ENCODE measurements at regions of chr15 and their contacts with region 1.

Region 1: DNA sequence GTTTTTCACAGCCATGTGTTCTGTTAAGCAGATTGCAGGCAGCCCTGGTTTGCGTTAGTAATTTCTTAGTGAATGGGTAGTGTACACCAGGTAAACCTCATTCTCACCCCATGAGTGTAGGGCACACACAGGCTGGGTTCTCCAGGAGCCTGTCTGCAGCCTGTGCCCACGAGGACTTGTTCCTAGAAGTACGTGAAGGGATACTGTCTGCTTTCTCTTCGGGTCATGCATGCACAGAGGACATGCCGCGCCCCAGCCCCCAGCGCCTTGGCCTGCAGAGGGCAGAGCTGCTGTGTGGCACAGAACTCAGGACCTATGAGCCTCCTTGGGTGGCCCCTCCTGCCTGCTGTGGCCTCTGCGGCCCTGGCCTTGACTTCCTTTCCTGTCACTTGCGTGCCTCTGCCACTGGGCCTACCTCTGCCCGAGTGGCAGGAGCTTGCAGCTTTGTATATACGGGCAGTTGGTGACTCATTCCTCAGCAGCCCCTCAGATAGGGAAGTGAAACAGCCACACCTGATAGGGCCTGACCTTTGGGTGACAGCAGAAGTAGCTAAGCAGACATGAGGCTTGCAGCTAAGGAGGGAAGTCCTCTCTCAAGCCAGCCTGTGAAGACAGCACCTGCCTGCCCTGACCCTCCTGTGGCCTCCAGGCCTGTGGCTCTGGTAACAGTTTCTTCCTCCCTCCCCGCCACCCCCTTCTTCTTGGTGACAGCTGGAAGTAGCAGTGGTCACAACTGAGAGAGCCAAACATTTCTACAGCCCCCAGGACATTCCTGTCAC is 19.5 kb downstream of the PPCDC start:
- DNase-seq: peak; percentile 70 to 81
- ATAC-seq: peak; percentile 86 to 92 (median 89)
- H3K4me3 ChIP-seq: no peak overlapping the region
- H3K4me3 Mint-ChIP-seq: peak overlapping the region; percentile 39
- H3K27ac ChIP-seq: peak overlapping the region; percentile 96
- H3K27ac Mint-ChIP-seq: peak overlapping the region; percentile 86 to 89
- H3K4me1 ChIP-seq: peaks cover 67% of the 10 kb centered on the region
- H3K4me1 Mint-ChIP-seq: peaks cover 62 to 72% of the 10 kb centered on the region in 2 donors
- H3K27me3 ChIP-seq: no peaks in the 10 kb centered on the region
- H3K27me3 Mint-ChIP-seq: no peaks in the 10 kb centered on the region
- CTCF ChIP-seq: peak; percentile 61

Region 2: DNA sequence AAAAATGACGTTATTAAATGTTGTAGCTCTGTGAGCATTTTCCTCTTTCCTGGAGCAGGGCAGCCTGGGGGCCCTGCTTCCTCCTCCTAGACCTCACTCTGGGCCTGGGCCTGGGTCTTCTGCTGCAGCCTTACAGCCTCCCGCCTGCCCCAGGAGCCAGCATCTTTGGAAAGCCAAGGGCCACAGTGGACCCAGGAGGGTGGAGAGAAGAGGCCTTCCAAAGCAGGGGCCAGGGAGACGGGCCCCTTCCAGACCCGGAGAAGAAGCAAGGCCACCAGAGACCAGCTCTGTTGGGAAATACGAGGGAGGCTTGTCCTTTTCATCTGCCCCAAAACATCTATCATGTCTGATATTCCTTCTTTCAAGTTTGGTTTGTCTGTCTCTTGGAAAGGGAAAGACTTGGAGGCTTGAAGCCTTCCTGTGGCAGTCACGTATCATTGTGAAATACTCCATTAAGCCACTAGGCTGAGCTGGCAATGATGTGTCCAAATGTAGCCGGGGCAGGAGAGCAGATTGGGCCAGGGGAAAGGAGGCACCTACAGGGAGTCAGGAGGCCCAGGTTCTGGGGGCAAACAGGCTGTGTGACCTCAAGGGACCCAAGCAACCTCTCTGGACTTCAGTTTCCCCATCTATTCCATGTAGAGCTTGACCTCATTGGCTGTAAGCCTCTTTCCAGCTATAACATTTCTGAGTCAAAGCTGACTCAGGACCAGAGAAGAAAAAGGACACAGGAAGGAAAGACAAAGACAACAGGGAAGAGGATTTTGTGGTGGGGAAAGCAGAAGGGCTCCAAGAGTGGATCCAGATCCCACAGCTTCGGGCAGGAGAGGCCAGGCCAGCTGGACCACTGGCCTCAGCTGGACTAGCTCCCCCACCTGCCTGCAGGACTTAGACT is 706.6 kb before region 1 on chr15:
- intact Hi-C with region 1: no loop called
- DNase-seq: no peak
- ATAC-seq: no peak
- H3K4me3 ChIP-seq: no peak overlapping the region
- H3K4me3 Mint-ChIP-seq: no peak overlapping the region
- H3K27ac ChIP-seq: no peak overlapping the region
- H3K27ac Mint-ChIP-seq: no peak overlapping the region
- H3K4me1 ChIP-seq: no peaks in the 10 kb centered on the region
- H3K4me1 Mint-ChIP-seq: peaks cover 0 to 5% of the 10 kb centered on the region in 2 donors
- H3K27me3 ChIP-seq: no peaks in the 10 kb centered on the region
- H3K27me3 Mint-ChIP-seq: no peaks in the 10 kb centered on the region
- CTCF ChIP-seq: no peak

Region 3: DNA sequence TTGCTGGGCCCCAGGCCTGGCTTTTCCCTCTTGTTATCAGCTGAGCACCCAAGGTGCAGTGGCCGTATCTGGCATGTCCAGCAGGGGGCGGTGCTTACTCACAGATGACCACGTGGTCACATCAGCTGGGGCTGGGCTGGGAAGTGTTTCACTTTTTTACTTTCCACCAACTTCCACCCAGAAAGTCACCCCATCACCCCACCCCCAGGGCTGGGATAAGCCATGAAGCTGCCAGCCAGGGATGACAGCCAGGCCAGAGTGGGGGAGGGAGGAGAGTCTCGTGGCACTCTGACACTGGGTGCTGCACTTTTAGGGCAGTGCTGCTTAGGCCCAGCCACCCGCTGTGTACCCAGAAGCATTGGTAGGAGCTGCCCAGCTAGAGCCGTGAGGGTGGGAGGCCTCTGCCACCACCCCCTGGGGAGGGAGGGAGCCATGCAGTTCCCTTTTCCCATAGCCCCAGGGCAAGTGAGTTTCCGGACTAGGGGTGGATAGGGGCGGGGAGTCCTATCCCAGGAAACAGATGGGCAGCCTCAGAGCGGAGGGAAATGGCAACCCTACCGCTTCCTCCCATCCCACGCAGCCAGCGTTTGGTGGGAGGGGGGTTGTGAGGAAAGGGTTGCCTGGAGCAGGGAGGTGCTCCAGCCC is 13.4 kb before region 1 on chr15:
- intact Hi-C with region 1: loop called (anchors 2 kb)
- DNase-seq: peak; percentile 89 to 92
- ATAC-seq: peak; percentile 90 to 99 (median 98)
- H3K4me3 ChIP-seq: no peak overlapping the region
- H3K4me3 Mint-ChIP-seq: no peak overlapping the region
- H3K27ac ChIP-seq: no peak overlapping the region
- H3K27ac Mint-ChIP-seq: peak overlapping the region in 1 of 2 donors; percentile 39
- H3K4me1 ChIP-seq: peaks cover 31% of the 10 kb centered on the region
- H3K4me1 Mint-ChIP-seq: peaks cover 12 to 17% of the 10 kb centered on the region in 2 donors
- H3K27me3 ChIP-seq: no peaks in the 10 kb centered on the region
- H3K27me3 Mint-ChIP-seq: no peaks in the 10 kb centered on the region
- CTCF ChIP-seq: peak; percentile 92

Region 4: GRCh38 chr15:75081150-75081549 is 38.2 kb after region 1 on chr15:
- intact Hi-C with region 1: no loop called
- DNase-seq: no peak
- ATAC-seq: no peak
- H3K4me3 ChIP-seq: no peak overlapping the region
- H3K4me3 Mint-ChIP-seq: no peak overlapping the region
- H3K27ac ChIP-seq: no peak overlapping the region
- H3K27ac Mint-ChIP-seq: no peak overlapping the region
- H3K4me1 ChIP-seq: peaks cover 6% of the 10 kb centered on the region
- H3K4me1 Mint-ChIP-seq: peaks cover 0 to 6% of the 10 kb centered on the region in 2 donors
- H3K27me3 ChIP-seq: no peaks in the 10 kb centered on the region
- H3K27me3 Mint-ChIP-seq: peaks cover 0 to 3% of the 10 kb centered on the region in 2 donors
- CTCF ChIP-seq: no peak

Region 5: GRCh38 chr15:75107908-75108838 is 65.3 kb after region 1 on chr15:
- intact Hi-C with region 1: loop called (anchors 1 kb)
- DNase-seq: peak; percentile 67 to 77
- ATAC-seq: peak; percentile 85 to 97 (median 91)
- H3K4me3 ChIP-seq: no peak overlapping the region
- H3K4me3 Mint-ChIP-seq: peak overlapping the region; percentile 76
- H3K27ac ChIP-seq: peak overlapping the region; percentile 55
- H3K27ac Mint-ChIP-seq: peak overlapping the region; percentile 81 to 94
- H3K4me1 ChIP-seq: peaks cover 55% of the 10 kb centered on the region
- H3K4me1 Mint-ChIP-seq: peaks cover 45 to 61% of the 10 kb centered on the region in 2 donors
- H3K27me3 ChIP-seq: no peaks in the 10 kb centered on the region
- H3K27me3 Mint-ChIP-seq: no peaks in the 10 kb centered on the region
- CTCF ChIP-seq: no peak

Measured in natural killer cell (primary cell).